ENCODE measurements at regions of chr6 and their contacts with region 1.

Region 1: DNA sequence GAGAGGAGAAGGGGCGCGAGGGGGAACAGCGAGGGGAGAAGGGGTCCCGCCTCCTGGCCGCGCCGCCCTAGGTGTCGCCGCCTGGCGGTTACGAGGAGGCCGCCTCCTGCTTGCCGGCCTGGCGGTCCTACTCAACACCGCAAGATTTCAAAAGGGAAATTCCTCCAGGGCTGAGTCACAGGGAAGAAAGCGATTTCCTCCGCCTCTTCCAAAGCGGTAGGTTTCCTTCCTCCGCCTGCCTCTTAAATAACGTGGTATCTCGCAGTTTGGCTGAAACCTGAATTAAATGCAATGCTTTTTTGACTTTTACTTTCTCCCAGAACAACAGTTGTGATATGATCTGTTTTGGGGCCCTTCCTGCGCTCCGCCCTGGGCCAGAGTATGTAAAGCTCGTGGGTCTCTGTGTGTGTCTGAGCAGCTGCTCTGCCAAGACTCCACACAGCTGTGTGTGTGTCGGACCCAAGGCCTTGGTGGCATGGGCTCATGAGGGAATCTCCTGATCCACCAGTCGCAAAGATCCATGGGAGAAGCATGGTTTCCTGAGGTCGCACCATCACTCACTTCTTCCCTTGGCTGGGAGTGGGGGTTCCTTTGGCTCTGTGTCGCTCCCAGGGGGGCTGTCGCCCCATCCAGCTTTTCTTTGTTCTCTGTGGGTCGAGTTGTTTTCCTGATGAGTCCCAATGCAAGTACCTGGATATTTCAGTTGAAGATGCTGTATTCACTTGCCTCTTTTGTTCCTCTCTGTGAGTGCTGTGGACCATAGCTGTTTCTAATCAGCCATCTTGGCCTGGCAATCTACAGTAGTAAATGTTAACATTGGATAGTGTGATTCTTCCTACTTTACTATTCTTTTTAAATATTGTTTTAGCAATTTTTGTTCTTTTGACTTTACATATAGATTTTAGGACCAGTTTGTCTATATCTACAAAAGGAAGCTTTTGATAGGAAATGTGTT is 31.6 kb upstream of the NOTCH4 start:
- DNase-seq: peak; percentile 81
- H3K4me3 ChIP-seq: peak overlapping the region; percentile 21 to 32 (median 24)
- H3K27ac ChIP-seq: peak overlapping the region; percentile 25
- H3K4me1 ChIP-seq: peaks cover 6% of the 10 kb centered on the region
- H3K27me3 ChIP-seq: no peaks in the 10 kb centered on the region
- CTCF ChIP-seq: peak; percentile 20 to 76

Region 2: DNA sequence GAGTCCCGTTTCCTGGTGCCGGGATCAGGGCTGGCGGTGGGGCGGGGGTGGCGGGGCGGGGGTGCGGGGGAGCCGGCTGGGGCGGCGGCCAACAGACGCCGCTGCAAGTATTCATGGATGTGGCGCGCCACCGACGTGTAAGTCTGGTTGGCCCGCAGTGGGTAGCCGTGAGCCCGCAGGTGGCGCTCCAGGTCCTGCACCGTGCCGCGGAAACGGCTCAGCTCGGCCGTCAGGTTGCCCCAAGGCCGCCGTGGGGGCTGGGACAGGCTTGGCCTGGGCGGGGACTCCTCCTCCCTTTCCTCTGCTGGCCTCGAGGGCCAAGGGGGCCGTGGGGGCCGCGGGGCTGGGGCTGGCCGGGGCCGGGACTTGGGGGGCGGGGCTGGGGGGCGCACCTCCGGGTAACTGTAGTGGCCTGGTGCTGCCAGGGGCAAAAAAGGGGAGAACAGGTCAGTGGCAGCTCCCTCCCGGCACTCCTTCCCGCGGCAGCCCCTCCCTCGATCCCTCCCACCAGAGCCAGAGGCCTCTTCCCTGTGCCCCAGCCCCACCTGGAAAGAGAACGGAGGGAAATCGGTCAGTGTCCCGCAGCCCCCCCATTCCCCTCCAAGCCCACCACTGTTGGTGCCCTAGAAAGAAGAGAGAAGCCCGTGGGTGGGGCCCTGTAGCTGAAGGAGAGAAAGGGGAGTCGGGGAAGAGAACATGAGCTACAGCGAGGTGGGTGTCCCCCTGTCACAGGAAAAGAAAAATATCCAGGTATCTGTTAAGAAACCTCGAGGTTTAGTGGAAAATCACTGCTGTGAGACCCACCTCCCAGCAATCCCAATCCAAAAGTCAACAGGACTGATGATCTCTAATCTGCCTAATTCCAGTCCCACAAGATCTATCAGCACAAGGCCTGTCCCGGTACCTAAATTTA is 167.6 kb before region 1 on chr6:
- CTCF ChIA-PET with region 1: no interaction called
- dilution Hi-C with region 1: no loop called
- in situ Hi-C with region 1: no loop called
- intact Hi-C with region 1: loop called (anchors 1 kb)
- DNase-seq: peak; percentile 34
- H3K4me3 ChIP-seq: no peak overlapping the region
- H3K27ac ChIP-seq: no peak overlapping the region
- H3K4me1 ChIP-seq: peaks cover 13% of the 10 kb centered on the region
- H3K27me3 ChIP-seq: peaks cover 14% of the 10 kb centered on the region
- CTCF ChIP-seq: peak; percentile 21 to 61

Region 3: DNA sequence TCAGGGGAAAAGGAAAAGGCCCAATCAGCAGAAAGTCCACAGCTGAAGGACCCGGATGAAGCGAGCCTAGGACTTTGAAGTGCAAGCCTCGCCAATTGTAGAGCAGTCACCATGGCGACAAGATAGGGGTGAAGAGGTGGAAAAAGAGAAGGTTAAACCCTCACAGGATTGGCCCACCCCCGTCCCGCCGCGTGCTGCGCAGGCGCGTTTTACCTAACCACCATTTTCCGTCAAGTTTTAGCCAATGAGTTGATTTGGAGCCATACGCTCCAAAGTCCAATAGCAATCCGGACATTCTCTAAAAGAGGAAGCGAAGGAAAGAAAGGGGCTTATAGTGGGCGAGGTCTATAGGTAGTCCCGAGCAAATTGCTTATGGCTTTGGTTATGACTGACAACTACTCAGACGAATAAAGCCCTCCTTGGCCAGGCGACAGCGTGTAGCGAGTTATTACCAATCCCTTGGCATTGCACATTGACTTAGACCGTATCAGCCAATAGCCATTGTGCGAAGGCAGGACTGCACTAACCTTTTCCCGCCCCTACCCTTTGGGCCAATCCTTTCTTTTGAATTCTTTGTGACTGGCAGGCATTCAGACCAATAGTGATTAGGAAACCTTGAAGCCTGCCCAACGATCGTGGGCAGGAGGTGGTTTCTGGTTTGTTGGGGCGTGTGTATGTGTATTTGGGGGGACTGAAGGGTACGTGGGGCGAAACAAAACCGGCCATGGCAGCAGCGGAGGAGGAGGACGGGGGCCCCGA is 77.5 kb before region 1 on chr6 and contains the start of gene RNF5:
- CTCF ChIA-PET with region 1: no interaction called
- dilution Hi-C with region 1: loop called (anchors 5 kb)
- in situ Hi-C with region 1: no loop called
- intact Hi-C with region 1: no loop called
- DNase-seq: peak; percentile 100
- H3K4me3 ChIP-seq: peak within 1 kb of the TSS; percentile 52 to 94 (median 69)
- H3K27ac ChIP-seq: peak within 1 kb of the TSS; percentile 94
- H3K4me1 ChIP-seq: peaks cover 36% of the 10 kb centered on the region
- H3K27me3 ChIP-seq: no peaks in the 10 kb centered on the region
- CTCF ChIP-seq: no peak
- total RNA-seq, gene RNF5: 28.4 to 28.7 TPM

Region 4: GRCh38 chr6:32327103-32327502 is 71.6 kb after region 1 on chr6:
- CTCF ChIA-PET with region 1: no interaction called
- dilution Hi-C with region 1: loop called (anchors 5 kb)
- in situ Hi-C with region 1: no loop called
- intact Hi-C with region 1: no loop called
- DNase-seq: no peak
- H3K4me3 ChIP-seq: no peak overlapping the region
- H3K27ac ChIP-seq: no peak overlapping the region
- H3K4me1 ChIP-seq: no peaks in the 10 kb centered on the region
- H3K27me3 ChIP-seq: peaks cover 2% of the 10 kb centered on the region
- CTCF ChIP-seq: no peak

Region 5: GRCh38 chr6:32393665-32394420 is 138.4 kb after region 1 on chr6:
- CTCF ChIA-PET with region 1: interaction called, 3 read pairs
- dilution Hi-C with region 1: no loop called
- in situ Hi-C with region 1: no loop called
- intact Hi-C with region 1: loop called (anchors 5 kb)
- DNase-seq: peak; percentile 33
- H3K4me3 ChIP-seq: peak overlapping the region in 2 of 3 experiments; percentile 5 to 22
- H3K27ac ChIP-seq: peak overlapping the region; percentile 80
- H3K4me1 ChIP-seq: peaks cover 24% of the 10 kb centered on the region
- H3K27me3 ChIP-seq: no peaks in the 10 kb centered on the region
- CTCF ChIP-seq: no peak

Region 6: GRCh38 chr6:32796848-32797776 is 541.6 kb after region 1 on chr6:
- CTCF ChIA-PET with region 1: no interaction called
- dilution Hi-C with region 1: no loop called
- in situ Hi-C with region 1: no loop called
- intact Hi-C with region 1: loop called (anchors 10 kb)
- DNase-seq: peak; percentile 54
- H3K4me3 ChIP-seq: peak overlapping the region in 2 of 3 experiments; percentile 19 to 30
- H3K27ac ChIP-seq: no peak overlapping the region
- H3K4me1 ChIP-seq: peaks cover 13% of the 10 kb centered on the region
- H3K27me3 ChIP-seq: no peaks in the 10 kb centered on the region
- CTCF ChIP-seq: peak; percentile 67 to 82

Measured in mammary epithelial cell (primary cell).